Activated T-helper 1 cell treated with anti-CD3 and anti-CD28 coated beads, Interleukin-12 subunit alpha, Interleukin-12 subunit beta, Interleukin-2, Interleukin-4 antibody, amounts not matched to agents 30 ng/mL and 10 ng/mL and 1 ng/mL, durations not matched to agents 14 hours and 24 hours and 36 hours (primary cell): ENCODE measurements at regions of chr15 and their contacts with region 1.

Region 1: DNA sequence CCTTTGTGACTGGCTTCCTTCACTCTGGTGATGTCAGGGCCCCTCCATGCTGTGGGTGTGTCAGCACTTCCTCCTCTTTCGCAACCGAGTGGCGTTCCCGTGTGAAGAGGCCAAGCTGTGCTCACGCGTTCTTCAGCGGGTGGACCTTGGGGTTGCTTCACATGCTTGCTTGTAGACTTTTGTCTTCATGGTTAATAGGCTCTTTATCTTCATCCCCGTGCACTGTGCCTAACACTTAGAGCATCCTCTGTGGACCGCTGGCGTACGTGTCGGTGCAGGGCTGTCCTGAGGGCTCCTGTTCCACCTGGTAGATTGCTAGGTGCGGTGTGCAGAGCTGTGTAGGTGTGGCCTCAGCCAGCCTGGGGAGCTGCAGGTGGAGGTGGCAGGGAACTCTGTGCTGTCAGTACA is 182.3 kb downstream of the OR4M2 start:
- DNase-seq: no peak
- H3K4me3 Mint-ChIP-seq: no peak overlapping the region
- H3K27ac Mint-ChIP-seq: no peak overlapping the region
- H3K4me1 Mint-ChIP-seq: peaks cover 24% of the 10 kb centered on the region
- H3K27me3 Mint-ChIP-seq: no peaks in the 10 kb centered on the region

Region 2: GRCh38 chr15:20356444-20356910 is 1906.1 kb before region 1 on chr15:
- intact Hi-C with region 1: loop called (anchors 5 kb)
- DNase-seq: peak; percentile 69
- H3K4me3 Mint-ChIP-seq: no peak overlapping the region
- H3K27ac Mint-ChIP-seq: no peak overlapping the region
- H3K4me1 Mint-ChIP-seq: peaks cover 6% of the 10 kb centered on the region
- H3K27me3 Mint-ChIP-seq: no peaks in the 10 kb centered on the region

Region 3: GRCh38 chr15:22224241-22224671 is 38.4 kb before region 1 on chr15:
- intact Hi-C with region 1: no loop called
- DNase-seq: no peak
- H3K4me3 Mint-ChIP-seq: no peak overlapping the region
- H3K27ac Mint-ChIP-seq: no peak overlapping the region
- H3K4me1 Mint-ChIP-seq: peaks cover 35% of the 10 kb centered on the region
- H3K27me3 Mint-ChIP-seq: no peaks in the 10 kb centered on the region